ENCODE measurements at regions of chr7 and their contacts with region 1.

Region 1: GRCh38 chr7:47088329-47089067 is 493.4 kb downstream of the TNS3 start:
- DNase-seq: peak; percentile 41 to 77 (median 62)
- ATAC-seq: peak; percentile 80 to 94 (median 90)
- H3K4me3 ChIP-seq: no peak overlapping the region
- H3K27ac ChIP-seq: peak overlapping the region in 1 of 12 donors; percentile 39
- H3K4me1 ChIP-seq: peaks cover 0 to 12% (median 3%) of the 10 kb centered on the region in 12 donors
- H3K27me3 ChIP-seq: no peaks in the 10 kb centered on the region
- CTCF ChIP-seq: peak; percentile 77 to 96 (median 92)
- POLR2A ChIP-seq: no peak

Region 2: GRCh38 chr7:45917658-45918057 is 1170.8 kb before region 1 on chr7:
- intact Hi-C with region 1: loop called in 8 of 10 experiments (anchors 1 to 5 kb)
- DNase-seq: peak; percentile 79 to 91 (median 83)
- ATAC-seq: peak; percentile 27 to 58 (median 50)
- H3K4me3 ChIP-seq: peak overlapping the region in 9 of 12 donors; percentile 1 to 72 (median 61)
- H3K27ac ChIP-seq: peak overlapping the region in 1 of 12 donors; percentile 27
- H3K4me1 ChIP-seq: peaks cover 0 to 44% (median 20%) of the 10 kb centered on the region in 12 donors
- H3K27me3 ChIP-seq: peaks cover 0 to 48% (median 0%) of the 10 kb centered on the region in 9 donors
- CTCF ChIP-seq: peak; percentile 83 to 98 (median 96)
- POLR2A ChIP-seq: no peak

Region 3: GRCh38 chr7:46357290-46357689 is 731.2 kb before region 1 on chr7:
- intact Hi-C with region 1: loop called in 9 of 10 experiments (anchors 2 to 10 kb)
- DNase-seq: no peak
- ATAC-seq: no peak
- H3K4me3 ChIP-seq: no peak overlapping the region
- H3K27ac ChIP-seq: no peak overlapping the region
- H3K4me1 ChIP-seq: no peaks in the 10 kb centered on the region
- H3K27me3 ChIP-seq: no peaks in the 10 kb centered on the region
- CTCF ChIP-seq: no peak
- POLR2A ChIP-seq: no peak

Region 4: GRCh38 chr7:46369933-46370654 is 718.4 kb before region 1 on chr7:
- intact Hi-C with region 1: loop called in 2 of 10 experiments (anchors 10 kb)
- DNase-seq: no peak
- ATAC-seq: peak in 1 of 4 donors; percentile 54
- H3K4me3 ChIP-seq: no peak overlapping the region
- H3K27ac ChIP-seq: peak overlapping the region in 2 of 12 donors; percentile 19 to 20
- H3K4me1 ChIP-seq: no peaks in the 10 kb centered on the region
- H3K27me3 ChIP-seq: no peaks in the 10 kb centered on the region
- CTCF ChIP-seq: no peak
- POLR2A ChIP-seq: no peak

Region 5: GRCh38 chr7:46468753-46469356 is 619.6 kb before region 1 on chr7:
- intact Hi-C with region 1: no loop called
- DNase-seq: no peak
- ATAC-seq: no peak
- H3K4me3 ChIP-seq: no peak overlapping the region
- H3K27ac ChIP-seq: no peak overlapping the region
- H3K4me1 ChIP-seq: no peaks in the 10 kb centered on the region
- H3K27me3 ChIP-seq: no peaks in the 10 kb centered on the region
- CTCF ChIP-seq: no peak
- POLR2A ChIP-seq: no peak

Region 6: DNA sequence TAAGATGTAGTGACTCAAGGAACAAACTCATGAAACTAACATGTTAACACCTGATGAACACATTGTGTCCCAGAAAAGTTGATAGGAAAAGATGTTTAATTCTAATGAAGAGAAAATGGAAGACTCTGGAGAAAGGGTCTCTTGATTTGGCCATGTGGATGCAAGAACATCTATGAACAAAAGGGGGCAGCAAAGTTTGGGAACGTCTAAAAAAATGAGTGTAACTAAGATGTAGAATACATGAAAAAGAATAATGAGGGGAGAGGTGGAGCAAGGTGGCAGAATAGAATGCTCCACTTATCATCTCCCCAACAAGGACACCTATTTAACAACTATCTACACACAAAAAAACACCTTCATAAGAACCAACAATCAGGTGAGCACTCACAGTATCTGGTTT is 311.7 kb before region 1 on chr7:
- intact Hi-C with region 1: loop called (anchors 2 to 5 kb)
- DNase-seq: no peak
- ATAC-seq: no peak
- H3K4me3 ChIP-seq: no peak overlapping the region
- H3K27ac ChIP-seq: no peak overlapping the region
- H3K4me1 ChIP-seq: peaks cover 0 to 31% (median 15%) of the 10 kb centered on the region in 12 donors
- H3K27me3 ChIP-seq: no peaks in the 10 kb centered on the region
- CTCF ChIP-seq: peak in 11 of 12 donors; percentile 27 to 63 (median 52)
- POLR2A ChIP-seq: no peak

Region 7: DNA sequence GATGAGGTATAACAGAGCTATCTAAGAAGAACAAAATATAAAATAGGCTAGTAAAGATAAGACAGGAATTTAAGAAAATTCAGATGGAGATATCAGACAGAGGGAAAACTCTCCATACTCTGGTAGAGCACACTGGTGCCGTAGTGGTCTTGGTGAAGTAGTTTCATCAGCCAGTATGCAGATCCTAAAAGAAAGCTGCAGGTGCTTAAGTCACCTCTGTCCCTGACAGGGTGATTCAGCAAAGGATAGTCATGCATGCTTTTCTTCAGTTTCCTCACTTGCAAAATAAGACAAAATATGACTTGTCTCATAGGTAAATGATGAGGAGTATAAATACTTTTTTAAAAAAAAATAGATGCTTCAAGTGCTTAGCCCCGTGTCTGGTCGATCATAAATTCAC is 301.5 kb before region 1 on chr7:
- intact Hi-C with region 1: no loop called
- DNase-seq: no peak
- ATAC-seq: no peak
- H3K4me3 ChIP-seq: no peak overlapping the region
- H3K27ac ChIP-seq: no peak overlapping the region
- H3K4me1 ChIP-seq: no peaks in the 10 kb centered on the region
- H3K27me3 ChIP-seq: no peaks in the 10 kb centered on the region
- CTCF ChIP-seq: no peak
- POLR2A ChIP-seq: no peak

Region 8: DNA sequence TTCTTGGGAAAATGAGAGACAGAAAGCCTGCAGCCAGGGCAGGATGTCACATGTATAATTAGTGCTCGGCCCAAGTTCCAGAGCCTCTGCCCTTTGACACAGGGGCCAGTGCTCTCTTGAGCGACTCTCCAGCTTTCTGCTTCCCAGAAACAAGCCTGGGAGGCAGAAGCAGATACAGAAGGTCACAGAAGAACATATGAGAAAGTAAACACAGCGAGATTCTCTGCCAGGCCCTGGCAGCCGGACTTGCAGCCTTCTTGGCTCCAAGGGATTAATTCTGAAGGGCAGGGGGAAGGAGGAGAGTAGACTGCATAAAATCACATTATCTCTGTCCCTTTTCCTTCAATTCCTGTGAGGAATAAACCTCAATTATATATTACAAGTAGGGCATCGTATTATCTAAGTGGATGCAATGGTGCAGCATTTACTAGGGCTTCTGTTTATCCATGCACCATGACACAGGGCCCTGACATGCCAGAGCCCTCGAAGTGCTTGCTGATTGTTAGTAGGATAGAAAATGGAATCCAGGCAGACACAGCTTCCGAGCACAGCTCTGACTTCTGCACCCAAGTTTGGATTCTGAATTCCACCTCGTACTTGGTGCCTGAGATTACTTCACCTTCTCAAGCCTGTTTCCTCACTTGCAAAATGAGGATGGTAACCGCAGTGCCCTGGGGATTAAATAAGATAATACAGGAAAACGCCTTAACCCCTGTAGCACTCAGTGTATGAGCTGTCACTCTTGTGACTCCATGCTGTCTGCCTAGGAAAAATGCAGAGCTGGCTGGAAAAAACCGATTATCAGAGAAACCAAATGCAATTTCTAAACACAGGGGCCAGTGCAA is 43.1 kb before region 1 on chr7:
- intact Hi-C with region 1: loop called in 1 of 10 experiments (anchors 5 kb)
- DNase-seq: peak; percentile 40 to 81 (median 63)
- ATAC-seq: peak; percentile 68 to 83 (median 78)
- H3K4me3 ChIP-seq: no peak overlapping the region
- H3K27ac ChIP-seq: peak overlapping the region; percentile 21 to 82 (median 64)
- H3K4me1 ChIP-seq: peaks cover 3 to 49% (median 31%) of the 10 kb centered on the region in 12 donors
- H3K27me3 ChIP-seq: no peaks in the 10 kb centered on the region
- CTCF ChIP-seq: no peak
- POLR2A ChIP-seq: no peak

Region 9: GRCh38 chr7:47074702-47075153 is 13.8 kb before region 1 on chr7:
- intact Hi-C with region 1: no loop called
- DNase-seq: peak in 1 of 5 donors; percentile 29
- ATAC-seq: peak; percentile 12 to 79 (median 72)
- H3K4me3 ChIP-seq: no peak overlapping the region
- H3K27ac ChIP-seq: peak overlapping the region in 3 of 12 donors; percentile 9 to 43 (median 29)
- H3K4me1 ChIP-seq: peaks cover 0 to 25% (median 13%) of the 10 kb centered on the region in 12 donors
- H3K27me3 ChIP-seq: no peaks in the 10 kb centered on the region
- CTCF ChIP-seq: no peak
- POLR2A ChIP-seq: no peak

Region 10: DNA sequence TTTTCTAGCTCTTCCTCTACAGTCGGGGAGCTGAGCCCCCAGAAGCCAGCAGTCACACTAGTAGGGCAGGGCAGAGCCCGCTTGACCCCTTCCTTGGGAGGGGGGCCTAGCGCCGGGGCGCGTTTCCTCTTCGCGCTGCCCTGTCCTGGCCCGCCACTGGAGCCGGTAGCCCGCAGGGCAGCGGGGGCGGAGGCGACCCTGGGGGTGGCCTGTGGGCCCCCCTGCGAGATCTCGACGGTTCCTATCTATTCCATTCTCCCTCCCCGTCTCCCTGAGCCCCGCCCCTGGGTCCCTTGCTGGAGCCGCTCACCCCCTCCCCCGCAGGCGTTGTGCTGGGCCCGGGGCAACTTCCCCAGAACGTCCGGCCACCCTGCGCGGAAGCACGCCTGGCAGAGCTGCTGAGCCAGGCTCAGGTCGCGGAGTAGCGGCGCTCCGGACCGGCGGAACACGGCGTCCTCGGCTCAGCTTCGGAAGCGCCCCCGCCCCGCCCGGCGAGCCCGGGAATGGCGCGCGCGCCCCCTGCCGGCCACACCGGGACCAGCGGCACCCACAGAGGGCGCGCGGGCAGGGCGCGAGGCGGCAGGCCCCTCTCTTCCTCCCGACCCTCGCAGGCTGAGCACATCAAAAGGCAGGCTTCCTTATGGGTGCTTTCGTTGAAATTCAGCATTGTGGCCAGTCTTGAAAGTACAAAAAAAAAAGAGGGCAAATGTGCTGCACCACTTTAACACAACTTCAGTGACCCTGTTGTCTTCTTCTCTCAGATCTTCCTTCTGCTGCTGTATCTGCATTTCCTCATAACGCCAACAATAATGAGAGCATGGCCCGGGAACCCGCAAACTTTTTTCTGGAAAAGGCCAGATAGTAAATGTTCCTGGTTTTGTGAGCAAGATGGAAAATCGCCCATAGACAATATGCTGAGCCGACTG is 165.8 kb after region 1 on chr7:
- intact Hi-C with region 1: loop called in 2 of 10 experiments (anchors 5 to 10 kb)
- DNase-seq: peak; percentile 82 to 92 (median 89)
- ATAC-seq: peak; percentile 82 to 95 (median 92)
- H3K4me3 ChIP-seq: peak overlapping the region; percentile 39 to 80 (median 61)
- H3K27ac ChIP-seq: peak overlapping the region; percentile 79 to 98 (median 90)
- H3K4me1 ChIP-seq: peaks cover 0 to 18% (median 16%) of the 10 kb centered on the region in 12 donors
- H3K27me3 ChIP-seq: no peaks in the 10 kb centered on the region
- CTCF ChIP-seq: peak; percentile 63 to 100 (median 98)
- POLR2A ChIP-seq: peak in 1 of 2 donors; percentile 57

Region 11: GRCh38 chr7:47738563-47739166 is 650.2 kb after region 1 on chr7:
- intact Hi-C with region 1: no loop called
- DNase-seq: no peak
- ATAC-seq: no peak
- H3K4me3 ChIP-seq: no peak overlapping the region
- H3K27ac ChIP-seq: no peak overlapping the region
- H3K4me1 ChIP-seq: peaks cover 0 to under 1% (median 0%) of the 10 kb centered on the region in 12 donors
- H3K27me3 ChIP-seq: no peaks in the 10 kb centered on the region
- CTCF ChIP-seq: no peak
- POLR2A ChIP-seq: no peak